ENCODE measurements at regions of chr4 and their contacts with region 1.

Region 1: GRCh38 chr4:24488399-24489164 is 95.8 kb downstream of the DHX15 start:
- DNase-seq: peak; percentile 80
- ATAC-seq: peak; percentile 81 to 90

Region 2: GRCh38 chr4:24413291-24413784 is 75.2 kb before region 1 on chr4:
- intact Hi-C with region 1: no loop called
- DNase-seq: no peak
- ATAC-seq: no peak

Region 3: GRCh38 chr4:24686871-24687680 is 198.5 kb after region 1 on chr4:
- intact Hi-C with region 1: loop called in 1 of 2 experiments (anchors 10 kb)
- DNase-seq: no peak
- ATAC-seq: peak in 1 of 2 donors; percentile 25

Region 4: GRCh38 chr4:24794916-24795665 is 306.5 kb after region 1 on chr4 and contains the start of gene SOD3:
- intact Hi-C with region 1: loop called in 1 of 2 experiments (anchors 10 kb)
- DNase-seq: peak; percentile 83
- ATAC-seq: peak; percentile 96 to 97
- total RNA-seq, gene SOD3: 69.4 to 120 TPM

Region 5: DNA sequence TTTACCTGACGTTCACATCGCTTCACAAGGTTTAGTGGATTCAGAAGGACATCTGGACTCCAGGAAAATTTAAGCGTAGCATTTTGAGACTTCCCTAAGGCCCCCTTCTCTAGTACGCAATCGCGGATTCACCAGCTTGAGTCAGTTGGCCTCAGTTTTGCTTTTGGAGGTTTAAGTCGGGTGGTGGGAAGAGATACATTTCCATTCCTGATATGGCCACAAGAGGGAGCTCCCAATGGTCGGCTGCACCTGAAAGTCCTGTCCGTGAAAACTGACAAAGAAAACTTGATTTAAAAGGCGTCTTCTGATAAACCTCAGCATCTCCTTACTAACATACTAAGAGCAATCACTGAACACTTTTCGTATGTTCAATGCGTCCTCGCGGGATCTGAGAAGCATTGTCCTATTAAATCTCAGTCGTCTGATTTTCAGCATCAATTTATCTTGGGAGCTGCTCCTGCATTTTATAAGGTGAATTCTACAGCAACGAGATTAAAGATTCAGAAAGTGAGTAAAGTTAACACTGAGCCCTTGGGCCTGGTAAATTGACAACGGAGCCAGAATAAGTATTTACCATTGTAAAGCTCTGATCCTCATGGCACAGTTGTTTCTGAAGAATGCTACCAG is 491.6 kb after region 1 on chr4:
- intact Hi-C with region 1: loop called in 1 of 2 experiments (anchors 10 kb)
- DNase-seq: peak; percentile 58
- ATAC-seq: peak; percentile 60 to 72